Adrenal gland (tissue), 19 donors: ENCODE measurements at regions of chr20 and their contacts with region 1.

Region 1: GRCh38 chr20:1325173-1326030 is 3.5 kb downstream of the SDCBP2 start:
- DNase-seq: peak; percentile 97 to 99 (median 98)
- H3K4me3 ChIP-seq: peak overlapping the region; percentile 67 to 99 (median 75)
- H3K27ac ChIP-seq: peak overlapping the region; percentile 92 to 100 (median 99)
- H3K4me1 ChIP-seq: peaks cover 21 to 57% of the 10 kb centered on the region in 2 donors
- H3K27me3 ChIP-seq: no peaks in the 10 kb centered on the region
- CTCF ChIP-seq: peak in 5 of 6 experiments; percentile 36 to 68 (median 50)
- POLR2A ChIP-seq: peak; percentile 95 to 96

Region 2: GRCh38 chr20:675453-676314 is 649.7 kb before region 1 on chr20 and contains the start of gene SCRT2:
- intact Hi-C with region 1: no loop called
- DNase-seq: peak; percentile 73 to 86 (median 85)
- H3K4me3 ChIP-seq: no peak within 1 kb of the TSS
- H3K27ac ChIP-seq: no peak within 1 kb of the TSS
- H3K4me1 ChIP-seq: peaks cover 0 to 12% of the 10 kb centered on the region in 2 donors
- H3K27me3 ChIP-seq: peaks cover 22% of the 10 kb centered on the region
- CTCF ChIP-seq: no peak
- POLR2A ChIP-seq: no peak
- total RNA-seq, gene SCRT2: not detected

Region 3: GRCh38 chr20:1122388-1123315 is 202.8 kb before region 1 on chr20:
- intact Hi-C with region 1: no loop called
- DNase-seq: peak in 6 of 7 donors; percentile 42 to 64 (median 48)
- H3K4me3 ChIP-seq: peak overlapping the region in 1 of 4 donors; percentile 2
- H3K27ac ChIP-seq: peak overlapping the region in 3 of 5 donors; percentile 11 to 74 (median 63)
- H3K4me1 ChIP-seq: peaks cover 40 to 52% of the 10 kb centered on the region in 2 donors
- H3K27me3 ChIP-seq: no peaks in the 10 kb centered on the region
- CTCF ChIP-seq: no peak
- POLR2A ChIP-seq: no peak

Region 4: DNA sequence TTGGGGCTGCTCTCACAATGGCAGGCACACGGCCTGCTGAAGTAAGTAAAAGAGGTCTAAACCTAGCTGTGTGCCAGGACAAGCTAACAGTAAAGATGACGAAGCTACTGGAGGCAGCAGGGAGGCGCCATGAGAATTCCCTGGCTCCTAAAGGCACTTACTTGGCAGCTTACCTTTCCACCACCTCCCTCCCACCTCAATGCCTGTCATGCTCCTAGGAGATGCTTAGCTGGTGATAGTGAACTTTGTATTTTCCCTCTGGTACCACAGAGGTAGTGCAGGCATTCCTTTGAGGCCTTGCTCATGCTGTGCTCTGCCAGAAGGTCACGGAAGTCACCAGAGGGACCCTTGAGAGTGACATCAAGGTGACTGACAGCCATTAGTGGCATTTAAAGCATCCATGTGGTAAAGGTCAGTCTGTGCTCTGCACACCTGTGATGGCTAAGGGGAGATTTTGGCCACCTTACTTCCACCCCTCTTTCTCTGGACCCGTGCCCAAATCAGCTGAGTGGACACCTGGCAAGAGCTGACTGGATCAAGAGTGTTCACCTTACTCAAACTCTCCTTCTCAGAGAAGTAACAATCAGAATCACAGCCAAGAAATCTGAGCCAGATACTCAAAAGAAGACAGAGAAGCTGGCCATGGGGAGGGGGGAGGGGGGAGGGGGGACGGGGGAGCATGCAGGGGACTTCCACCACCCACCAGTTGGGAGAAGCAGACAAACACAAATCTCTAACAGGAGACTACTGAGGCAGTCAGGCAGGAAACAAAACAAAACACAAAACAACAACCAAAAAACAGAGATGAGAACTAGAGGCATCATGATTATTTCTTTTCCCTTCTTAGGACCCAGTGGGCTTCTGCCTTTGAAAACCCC is 64.5 kb after region 1 on chr20:
- intact Hi-C with region 1: loop called in 1 of 2 experiments (anchors 5 kb)
- DNase-seq: no peak
- H3K4me3 ChIP-seq: no peak overlapping the region
- H3K27ac ChIP-seq: peak overlapping the region in 3 of 5 donors; percentile 14 to 83 (median 66)
- H3K4me1 ChIP-seq: peaks cover 21 to 60% of the 10 kb centered on the region in 2 donors
- H3K27me3 ChIP-seq: no peaks in the 10 kb centered on the region
- CTCF ChIP-seq: no peak
- POLR2A ChIP-seq: no peak

Region 5: GRCh38 chr20:1397710-1398109 is 72.3 kb after region 1 on chr20:
- intact Hi-C with region 1: loop called in 1 of 2 experiments (anchors 5 kb)
- DNase-seq: no peak
- H3K4me3 ChIP-seq: no peak overlapping the region
- H3K27ac ChIP-seq: no peak overlapping the region
- H3K4me1 ChIP-seq: peaks cover 6% of the 10 kb centered on the region in 2 donors
- H3K27me3 ChIP-seq: peaks cover 16% of the 10 kb centered on the region
- CTCF ChIP-seq: peak; percentile 5 to 53 (median 33)
- POLR2A ChIP-seq: no peak